Ovary (tissue), 10 donors: ENCODE measurements at regions of chr15 and their contacts with region 1.

Region 1: GRCh38 chr15:68053701-68054627 is at the start of gene PIAS1:
- DNase-seq: peak; percentile 91 to 96 (median 95)
- H3K4me3 ChIP-seq: peak within 1 kb of the TSS; percentile 100
- H3K27ac ChIP-seq: peak within 1 kb of the TSS; percentile 60 to 76
- H3K4me1 ChIP-seq: peaks cover 2% of the 10 kb centered on the region
- H3K27me3 ChIP-seq: no peaks in the 10 kb centered on the region
- CTCF ChIP-seq: peak in 1 of 3 donors; percentile 46
- EP300 ChIP-seq: no peak
- POLR2A ChIP-seq: peak; percentile 84
- total RNA-seq, gene PIAS1: 39.8 to 75.4 (median 53.6) TPM

Region 2: DNA sequence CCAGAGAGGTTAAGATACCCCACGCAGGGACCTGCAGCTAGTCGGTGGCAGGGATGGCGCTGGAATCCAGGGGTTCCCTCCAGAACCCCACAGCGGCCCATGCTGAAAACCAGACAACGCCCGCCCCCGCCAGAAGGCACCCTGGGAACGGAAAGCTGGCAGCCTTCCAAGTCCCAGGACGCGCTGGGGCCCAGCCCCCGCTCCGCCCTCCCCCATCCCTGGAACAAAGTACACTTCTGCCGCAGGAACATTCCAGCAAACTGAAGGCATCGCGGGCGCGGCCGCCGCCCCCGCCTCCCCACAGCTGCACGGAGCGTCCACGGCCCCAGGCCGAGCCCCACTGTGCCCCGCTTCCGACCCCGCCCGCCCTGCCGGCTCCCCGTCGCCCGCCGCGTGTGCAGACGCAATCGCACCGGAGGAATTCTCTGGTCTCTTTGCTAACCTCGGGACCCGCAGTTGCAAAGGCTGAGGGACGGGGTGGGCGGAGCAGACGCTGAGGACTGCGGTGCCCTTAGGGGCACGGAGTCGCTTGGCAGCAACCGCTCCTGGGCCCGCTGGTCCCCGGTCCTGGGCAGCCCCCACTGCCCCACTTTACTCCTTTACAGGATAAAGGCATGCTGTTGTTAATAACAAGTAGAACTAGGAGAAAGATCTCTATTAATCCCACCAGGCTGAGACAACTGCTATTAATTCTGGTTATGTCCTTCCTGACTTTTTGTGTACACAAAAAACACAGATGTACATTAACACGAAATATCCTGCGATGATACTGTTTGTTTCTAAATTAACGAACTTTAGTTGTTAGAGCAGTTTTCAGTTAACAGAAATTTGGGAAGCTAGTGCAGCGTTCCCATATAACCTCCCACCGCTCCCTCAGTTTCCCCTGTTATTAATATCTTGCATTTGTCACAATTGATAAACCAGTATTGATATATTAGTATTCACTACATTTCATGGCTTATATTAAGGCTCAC is 169.2 kb before region 1 on chr15:
- intact Hi-C with region 1: loop called in 1 of 4 experiments (anchors 10 kb)
- DNase-seq: peak; percentile 85 to 96 (median 90)
- H3K4me3 ChIP-seq: peak overlapping the region; percentile 43
- H3K27ac ChIP-seq: peak overlapping the region; percentile 53 to 65
- H3K4me1 ChIP-seq: no peaks in the 10 kb centered on the region
- H3K27me3 ChIP-seq: no peaks in the 10 kb centered on the region
- CTCF ChIP-seq: no peak
- EP300 ChIP-seq: no peak
- POLR2A ChIP-seq: no peak

Region 3: DNA sequence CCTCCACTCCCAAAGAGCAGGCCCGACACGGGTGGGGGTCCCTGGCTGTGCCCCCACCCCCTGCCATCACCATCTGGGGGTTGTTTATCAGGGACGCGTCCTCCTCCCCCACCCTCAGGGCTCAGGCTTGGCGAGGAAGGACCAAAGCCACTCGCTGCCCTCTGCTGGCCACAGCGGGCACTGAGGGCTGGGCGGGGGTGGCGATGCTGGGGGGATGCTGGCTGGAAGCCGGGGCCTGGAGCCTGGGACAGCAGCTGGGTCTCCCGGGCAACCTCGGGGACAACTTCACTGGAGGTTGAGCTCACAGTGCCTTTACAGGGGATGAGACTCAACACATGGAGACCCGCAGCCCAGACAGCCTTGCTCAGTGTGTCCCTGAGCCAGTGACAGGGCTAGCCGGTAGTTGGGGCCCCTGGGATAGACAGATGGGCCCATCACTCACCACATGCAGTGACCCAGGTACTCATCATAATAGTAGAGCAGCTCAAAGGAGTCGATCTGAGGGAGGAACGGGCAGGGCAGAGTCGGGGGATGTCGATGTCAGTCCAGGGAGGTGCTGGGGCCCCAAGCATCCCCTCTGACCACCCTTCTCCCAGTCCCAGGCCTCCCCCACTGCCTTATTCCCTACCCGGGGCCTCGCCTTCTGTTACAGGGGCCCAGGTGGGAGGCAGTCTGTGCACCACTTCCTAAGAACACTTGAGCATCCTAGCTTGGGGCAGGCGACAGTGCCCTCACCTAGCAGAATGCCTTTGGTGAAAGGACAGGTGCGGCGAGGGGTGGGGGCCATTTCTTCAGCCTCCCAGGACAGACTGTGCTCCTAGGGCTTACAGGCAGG is 157.1 kb after region 1 on chr15:
- intact Hi-C with region 1: loop called in 1 of 4 experiments (anchors 10 kb)
- DNase-seq: peak; percentile 72 to 86 (median 80)
- H3K4me3 ChIP-seq: peak overlapping the region; percentile 18
- H3K27ac ChIP-seq: no peak overlapping the region
- H3K4me1 ChIP-seq: no peaks in the 10 kb centered on the region
- H3K27me3 ChIP-seq: no peaks in the 10 kb centered on the region
- CTCF ChIP-seq: peak; percentile 57 to 92 (median 87)
- EP300 ChIP-seq: no peak
- POLR2A ChIP-seq: no peak